Dorsolateral prefrontal cortex (tissue), 120 donors: ENCODE measurements at regions of chr2 and their contacts with region 1.

Region 1: GRCh38 chr2:240704651-240705050 is 13.0 kb downstream of the AQP12A start:
- DNase-seq: peak in 3 of 10 donors; percentile 40 to 63 (median 51)
- H3K4me3 ChIP-seq: no peak overlapping the region
- H3K27ac ChIP-seq: no peak overlapping the region
- H3K27me3 ChIP-seq: peaks cover 0 to 7% (median 0%) of the 10 kb centered on the region in 45 donors
- CTCF ChIP-seq: no peak

Region 2: DNA sequence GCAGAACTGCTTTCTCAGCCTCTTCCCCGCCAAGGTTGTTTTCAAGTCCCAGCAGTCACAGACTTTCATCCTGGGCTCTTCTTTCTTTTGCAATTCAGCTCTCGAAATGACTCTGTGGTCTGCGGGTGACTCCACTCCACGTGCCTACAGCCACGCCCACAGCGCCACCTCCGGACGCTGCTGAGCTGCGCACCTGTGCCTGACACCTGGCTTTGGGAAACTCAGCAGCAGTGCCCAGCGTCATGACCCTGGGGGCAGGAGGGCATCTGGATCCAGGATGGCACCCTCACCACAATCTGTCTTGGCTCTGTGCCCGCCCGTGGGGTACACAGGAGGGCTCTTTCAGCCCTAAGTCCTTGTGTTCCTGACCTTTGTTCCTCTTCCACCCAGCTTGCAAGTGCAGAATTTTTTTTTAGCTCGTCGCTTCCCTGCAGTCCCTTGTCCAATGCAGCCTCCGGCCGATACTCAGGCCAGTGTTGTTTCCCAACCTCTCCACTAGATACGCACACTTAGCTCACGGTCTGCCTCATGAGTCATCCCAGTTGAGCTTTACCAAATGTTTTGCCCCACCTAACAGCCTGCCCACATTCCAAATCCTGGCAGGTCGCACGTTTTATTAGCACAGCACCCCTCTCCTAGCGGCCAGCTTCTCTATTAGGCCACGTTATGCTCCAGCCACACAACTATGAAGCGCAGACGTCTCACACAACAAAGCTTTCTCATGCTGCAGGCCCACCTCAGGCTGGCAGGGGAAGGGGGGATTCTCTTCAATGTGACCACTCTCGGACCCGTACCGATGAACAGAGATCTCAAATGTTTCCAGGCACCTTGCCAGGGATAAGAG is 124.7 kb before region 1 on chr2:
- intact Hi-C with region 1: loop called in 1 of 2 experiments (anchors 5 kb)
- DNase-seq: no peak
- H3K4me3 ChIP-seq: peak overlapping the region in 1 of 59 donors; percentile 6
- H3K27ac ChIP-seq: peak overlapping the region in 13 of 59 donors; percentile 7 to 48 (median 33)
- H3K27me3 ChIP-seq: no peaks in the 10 kb centered on the region
- CTCF ChIP-seq: no peak

Region 3: DNA sequence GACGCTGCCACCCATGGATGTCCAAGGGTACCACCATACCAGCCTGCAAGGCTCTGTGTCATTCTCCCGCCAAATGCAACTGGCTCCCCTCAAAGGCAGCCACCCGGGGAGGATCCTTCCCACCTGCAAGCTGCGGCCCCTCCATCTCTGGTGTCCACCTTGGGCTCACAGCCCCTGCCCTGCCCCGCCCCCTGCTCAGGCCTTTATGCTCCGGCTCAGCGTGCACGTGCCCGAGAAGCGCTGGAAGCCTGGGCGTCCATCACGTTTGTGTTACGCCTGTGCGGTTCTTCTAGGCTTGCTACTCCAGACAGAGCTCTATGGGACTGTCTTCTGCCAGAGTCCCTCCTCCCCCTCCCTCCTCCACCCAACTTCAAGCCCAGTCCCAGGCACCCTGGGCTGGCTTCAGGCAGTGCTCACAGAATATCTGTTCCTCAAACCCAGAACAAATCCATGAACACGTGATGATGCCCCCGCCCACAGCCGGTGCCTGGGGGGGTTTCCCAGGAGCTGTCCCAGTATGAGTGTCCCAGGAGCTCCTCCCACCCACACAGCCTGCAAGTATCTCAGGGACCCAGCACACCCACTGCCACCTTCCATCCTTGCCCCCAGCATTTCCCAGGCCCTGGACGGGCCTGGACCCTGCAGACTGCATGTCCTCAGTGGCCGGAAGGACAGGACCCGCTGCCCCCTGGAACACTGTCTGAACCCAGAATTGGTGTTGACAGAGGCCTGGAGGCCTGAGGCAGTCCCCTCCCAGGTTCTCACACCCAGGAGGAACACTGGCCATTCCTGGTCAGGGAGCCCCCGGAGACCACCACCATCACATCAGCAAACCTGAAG is 85.1 kb after region 1 on chr2:
- intact Hi-C with region 1: no loop called
- DNase-seq: peak in 4 of 10 donors; percentile 4 to 44 (median 30)
- H3K4me3 ChIP-seq: no peak overlapping the region
- H3K27ac ChIP-seq: peak overlapping the region in 9 of 59 donors; percentile 1 to 48 (median 27)
- H3K27me3 ChIP-seq: no peaks in the 10 kb centered on the region
- CTCF ChIP-seq: no peak